ENCODE measurements at regions of chr3 and their contacts with region 1.

Region 1: DNA sequence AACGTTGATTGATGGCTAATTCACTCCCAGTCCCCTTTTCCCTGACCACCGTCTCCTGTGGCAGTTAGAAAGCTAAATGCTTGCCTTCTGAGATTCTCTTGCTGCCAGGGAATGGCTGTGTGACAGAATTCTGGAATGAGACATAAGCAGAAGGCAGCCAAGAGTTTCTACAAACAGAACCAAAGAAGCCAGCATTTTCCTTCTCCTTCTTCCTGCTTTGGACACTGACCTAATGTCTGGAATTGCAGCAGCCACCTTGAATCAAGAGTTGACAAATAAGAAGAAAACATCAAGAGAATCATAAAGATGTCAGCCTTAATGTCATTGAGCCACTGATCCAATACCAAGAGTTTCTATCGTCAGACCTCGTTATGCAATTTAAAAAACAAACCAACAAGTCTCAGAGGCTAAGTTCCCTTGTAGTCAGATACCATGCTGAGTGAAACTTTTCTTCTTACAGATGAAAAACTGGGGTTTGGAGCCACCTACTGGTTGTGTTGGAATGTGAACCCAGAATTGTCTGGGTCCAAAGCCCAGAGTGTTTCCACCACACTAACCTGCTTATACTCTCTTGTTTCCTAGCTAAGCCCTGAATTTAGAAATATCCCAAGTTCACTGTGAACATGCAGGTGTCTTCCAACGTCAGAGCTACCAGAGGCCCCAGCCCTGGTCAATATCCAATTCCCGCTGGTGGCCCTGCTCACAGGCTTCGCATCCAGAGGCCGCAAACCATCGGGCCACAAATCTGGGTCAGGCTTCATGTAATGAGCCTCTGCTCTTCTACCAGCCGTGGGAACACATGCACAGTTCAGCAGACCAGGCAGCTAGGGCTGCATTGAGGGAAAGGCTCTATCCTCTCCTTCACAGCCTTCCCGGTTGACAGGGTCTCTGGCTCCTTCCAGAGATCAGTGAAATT is 42.5 kb downstream of the MCF2L2 start:
- DNase-seq: peak in 8 of 9 donors; percentile 40 to 67 (median 57)
- ATAC-seq: peak; percentile 81
- H3K4me3 ChIP-seq: no peak overlapping the region
- H3K4me3 Mint-ChIP-seq: no peak overlapping the region
- H3K27ac ChIP-seq: no peak overlapping the region
- H3K27ac Mint-ChIP-seq: peak overlapping the region in 1 of 9 donors; percentile 5
- H3K4me1 ChIP-seq: no peaks in the 10 kb centered on the region
- H3K4me1 Mint-ChIP-seq: peaks cover 0 to 6% (median 3%) of the 10 kb centered on the region in 7 donors
- H3K27me3 ChIP-seq: no peaks in the 10 kb centered on the region
- H3K27me3 Mint-ChIP-seq: no peaks in the 10 kb centered on the region

Region 2: DNA sequence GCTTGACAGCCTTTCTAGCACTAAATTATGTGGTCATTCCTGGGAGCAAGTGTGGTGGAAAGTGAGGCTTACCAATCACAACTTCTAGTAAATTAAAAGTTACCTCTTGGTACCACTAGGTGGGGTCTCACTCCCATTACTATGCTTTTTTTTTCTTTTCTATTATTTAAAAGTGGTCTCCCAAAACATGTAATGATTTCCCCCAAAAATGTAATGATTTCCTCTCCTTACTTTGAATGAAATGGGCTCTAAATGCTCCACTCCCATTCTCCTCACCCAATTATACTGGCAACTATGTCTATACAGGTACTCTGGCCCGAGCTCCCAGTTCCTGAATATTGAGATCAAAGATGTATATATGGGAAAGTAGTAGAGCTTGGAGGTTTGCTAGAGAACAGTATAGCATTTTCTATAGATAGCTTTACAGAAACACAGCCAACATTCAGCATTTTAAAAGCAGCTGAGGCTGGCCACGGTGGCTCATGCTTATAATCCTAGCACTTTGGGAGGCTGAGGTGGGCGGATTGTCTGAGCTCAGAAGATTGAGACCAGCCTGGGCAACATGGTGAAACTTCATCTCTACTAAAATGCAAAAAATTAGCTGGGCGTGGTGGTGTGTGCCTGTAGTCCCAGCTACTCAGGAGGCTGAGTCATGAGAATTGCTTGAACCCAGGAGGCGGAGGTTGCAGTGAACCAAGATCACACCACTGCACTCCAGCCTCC is 476.5 kb before region 1 on chr3:
- CTCF ChIA-PET with region 1: no interaction called
- POLR2A ChIA-PET with region 1: no interaction called
- intact Hi-C with region 1: loop called (anchors 2 to 5 kb)
- DNase-seq: peak in 1 of 9 donors; percentile 16
- ATAC-seq: peak; percentile 46
- H3K4me3 ChIP-seq: no peak overlapping the region
- H3K4me3 Mint-ChIP-seq: no peak overlapping the region
- H3K27ac ChIP-seq: peak overlapping the region; percentile 16
- H3K27ac Mint-ChIP-seq: peak overlapping the region in 8 of 9 donors; percentile 20 to 88 (median 72)
- H3K4me1 ChIP-seq: peaks cover 15 to 17% of the 10 kb centered on the region in 2 donors
- H3K4me1 Mint-ChIP-seq: peaks cover 22 to 50% (median 42%) of the 10 kb centered on the region in 7 donors
- H3K27me3 ChIP-seq: no peaks in the 10 kb centered on the region
- H3K27me3 Mint-ChIP-seq: no peaks in the 10 kb centered on the region

Region 3: DNA sequence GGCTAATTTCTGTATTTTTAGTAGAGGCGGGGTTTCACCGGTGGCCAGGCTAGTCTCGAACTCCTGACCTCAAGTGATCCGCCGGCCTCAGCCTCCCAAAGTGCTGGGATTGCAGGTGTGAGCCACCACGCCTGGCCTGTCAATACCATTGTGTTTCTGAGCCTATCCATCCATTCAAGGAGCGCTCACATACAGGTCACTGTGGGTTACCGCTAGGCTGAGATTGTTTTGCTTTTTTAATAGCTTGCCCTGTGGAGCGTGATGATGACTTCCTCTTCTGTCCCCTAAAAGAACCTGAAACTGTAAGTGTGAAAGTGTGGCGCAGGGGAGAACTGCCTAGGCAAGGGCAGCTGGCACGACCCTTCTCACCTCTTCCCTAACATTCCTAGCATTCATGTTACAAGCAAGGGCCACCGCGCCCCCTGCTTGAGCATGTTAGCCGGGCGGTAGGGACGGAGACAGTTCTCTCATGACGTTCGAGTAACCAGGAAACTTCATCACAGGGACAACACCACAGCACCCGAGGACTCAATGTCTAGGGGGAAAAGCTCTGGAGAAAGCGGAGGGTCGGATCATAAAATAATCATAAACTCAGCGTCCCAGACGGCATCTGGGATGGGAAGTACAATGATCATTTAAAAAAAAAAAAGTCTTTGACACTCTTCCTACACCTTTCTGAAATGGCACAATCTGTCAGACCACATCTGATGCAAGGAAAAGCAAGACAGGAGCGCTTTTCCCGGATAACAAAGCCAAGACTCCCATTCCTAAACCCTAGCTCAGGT is 224.2 kb before region 1 on chr3:
- CTCF ChIA-PET with region 1: interaction called, 4 read pairs
- POLR2A ChIA-PET with region 1: interaction called, 3 read pairs
- intact Hi-C with region 1: loop called in 1 of 2 experiments (anchors 1 kb)
- DNase-seq: peak in 4 of 9 donors; percentile 12 to 18 (median 14)
- ATAC-seq: no peak
- H3K4me3 ChIP-seq: peak overlapping the region; percentile 92
- H3K4me3 Mint-ChIP-seq: peak overlapping the region; percentile 80 to 97 (median 90)
- H3K27ac ChIP-seq: peak overlapping the region; percentile 61
- H3K27ac Mint-ChIP-seq: peak overlapping the region; percentile 46 to 90 (median 76)
- H3K4me1 ChIP-seq: peaks cover 5% of the 10 kb centered on the region in 2 donors
- H3K4me1 Mint-ChIP-seq: peaks cover 8 to 33% (median 9%) of the 10 kb centered on the region in 7 donors
- H3K27me3 ChIP-seq: no peaks in the 10 kb centered on the region
- H3K27me3 Mint-ChIP-seq: peaks cover 0 to 3% (median 0%) of the 10 kb centered on the region in 5 donors

Region 4: DNA sequence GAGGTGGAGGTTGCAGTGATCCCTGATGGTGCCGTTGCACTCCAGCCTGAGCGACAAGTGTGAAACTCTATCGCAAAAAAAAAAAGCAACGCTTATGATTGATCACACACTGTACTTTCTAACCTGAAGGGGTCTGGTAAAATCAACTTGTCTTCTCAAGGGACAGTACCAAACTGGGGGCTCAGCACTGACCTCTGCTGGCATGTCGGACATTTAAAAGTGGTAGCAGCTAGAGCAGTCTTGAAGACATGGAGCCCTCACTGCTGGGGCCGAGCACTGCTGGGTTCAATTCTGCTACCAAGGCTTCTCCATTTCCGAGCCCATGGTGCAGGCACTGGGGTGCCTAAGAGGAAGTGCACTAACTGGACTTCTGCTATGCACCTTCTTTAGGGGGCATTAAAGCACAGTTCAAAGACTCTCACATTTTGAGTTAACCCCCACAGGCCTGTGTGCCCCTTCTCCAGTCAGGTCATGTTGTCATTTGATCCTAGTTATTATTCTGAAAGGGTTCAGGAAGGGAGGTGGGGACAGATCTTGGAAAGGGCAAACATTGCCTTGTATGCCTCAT is 197.0 kb before region 1 on chr3:
- CTCF ChIA-PET with region 1: interaction called, 82 read pairs
- POLR2A ChIA-PET with region 1: no interaction called
- intact Hi-C with region 1: loop called (anchors 1 kb)
- DNase-seq: peak in 1 of 9 donors; percentile 17
- ATAC-seq: peak; percentile 50
- H3K4me3 ChIP-seq: no peak overlapping the region
- H3K4me3 Mint-ChIP-seq: no peak overlapping the region
- H3K27ac ChIP-seq: no peak overlapping the region
- H3K27ac Mint-ChIP-seq: no peak overlapping the region
- H3K4me1 ChIP-seq: no peaks in the 10 kb centered on the region
- H3K4me1 Mint-ChIP-seq: peaks cover 0 to 16% (median 0%) of the 10 kb centered on the region in 7 donors
- H3K27me3 ChIP-seq: no peaks in the 10 kb centered on the region
- H3K27me3 Mint-ChIP-seq: no peaks in the 10 kb centered on the region

Region 5: DNA sequence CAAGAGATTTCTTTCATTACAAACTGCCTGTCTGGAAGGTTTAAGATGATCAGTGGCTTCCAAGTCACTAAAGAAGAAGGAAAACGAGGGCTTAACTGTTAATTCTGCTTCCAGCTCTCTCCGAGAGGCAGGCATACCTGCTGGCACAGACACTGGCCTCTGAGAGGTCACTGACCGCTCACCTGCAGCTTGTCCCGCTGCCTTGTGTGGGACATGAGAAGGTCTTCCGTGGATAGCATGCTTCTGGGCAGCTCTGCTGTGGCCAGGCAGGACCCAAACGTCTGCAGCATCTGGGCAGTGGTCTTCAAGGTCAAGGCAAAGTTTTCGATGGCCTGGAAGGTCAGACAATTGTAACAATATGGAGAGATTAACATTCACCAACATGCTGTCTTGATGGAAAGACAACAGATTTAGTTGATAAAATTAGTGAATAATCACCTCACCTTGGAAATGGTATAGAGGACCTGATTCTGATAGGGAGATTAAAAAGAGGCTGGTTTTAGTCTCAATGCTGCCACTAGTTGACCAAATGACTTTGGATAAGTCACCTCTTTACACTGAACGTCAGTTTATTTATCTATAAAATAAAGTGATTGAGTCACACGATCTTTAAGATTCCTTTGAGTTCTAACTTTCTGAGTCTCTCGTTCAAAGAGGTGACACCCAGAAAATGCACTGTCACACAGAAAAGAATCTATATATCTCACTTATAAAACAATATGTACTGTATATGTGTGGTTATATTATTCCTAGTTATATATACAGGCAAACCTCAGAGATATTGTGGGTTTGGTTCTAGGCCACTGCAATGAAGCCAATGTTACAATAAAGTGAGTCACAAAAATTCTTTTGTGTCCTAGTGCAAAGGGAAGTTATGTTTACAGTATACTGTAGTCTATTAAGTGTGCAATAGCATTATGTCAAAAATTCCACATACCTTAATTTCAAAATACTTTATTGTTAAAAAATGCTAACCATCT is 67.8 kb before region 1 on chr3:
- CTCF ChIA-PET with region 1: no interaction called
- POLR2A ChIA-PET with region 1: no interaction called
- intact Hi-C with region 1: loop called in 1 of 2 experiments (anchors 5 kb)
- DNase-seq: no peak
- ATAC-seq: peak; percentile 34
- H3K4me3 ChIP-seq: no peak overlapping the region
- H3K4me3 Mint-ChIP-seq: peak overlapping the region in 1 of 10 donors; percentile 78
- H3K27ac ChIP-seq: no peak overlapping the region
- H3K27ac Mint-ChIP-seq: peak overlapping the region in 1 of 9 donors; percentile 40
- H3K4me1 ChIP-seq: peaks cover 0 to 12% of the 10 kb centered on the region in 2 donors
- H3K4me1 Mint-ChIP-seq: peaks cover 7 to 20% (median 13%) of the 10 kb centered on the region in 7 donors
- H3K27me3 ChIP-seq: no peaks in the 10 kb centered on the region
- H3K27me3 Mint-ChIP-seq: no peaks in the 10 kb centered on the region